Caco-2 (cell line): ENCODE measurements at regions of chr1 and their contacts with region 1.

Region 1: DNA sequence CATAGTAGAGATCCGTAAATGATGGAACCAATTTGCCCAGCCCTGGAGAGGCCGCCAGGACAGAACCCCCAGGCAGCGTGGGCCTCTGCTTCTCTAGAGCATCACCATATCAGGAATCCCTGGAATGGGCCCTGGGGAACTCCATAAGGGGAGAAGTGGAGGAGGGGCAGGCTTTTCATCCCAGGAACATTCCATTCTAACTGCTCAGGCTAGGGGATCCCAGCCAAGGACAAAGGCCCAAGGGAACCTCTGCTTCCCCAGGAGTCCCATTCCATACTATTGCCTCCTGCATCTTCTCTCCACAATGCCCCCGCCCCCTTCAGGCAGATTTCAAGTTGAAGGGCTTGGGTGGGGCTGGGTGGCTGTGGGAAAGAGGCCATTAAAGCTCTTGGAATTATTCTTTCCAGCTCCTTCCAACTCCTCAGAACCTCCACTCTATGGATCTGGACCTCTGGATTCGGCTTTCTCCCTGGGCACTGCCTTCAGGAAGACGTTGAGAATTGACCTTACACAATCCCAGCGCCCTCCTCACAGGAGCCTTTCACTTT is 6.0 kb downstream of the TRNP1 start:
- DNase-seq: peak; percentile 77 to 87
- H3K4me3 ChIP-seq: no peak overlapping the region
- H3K4me3 Mint-ChIP-seq: no peak overlapping the region
- H3K27ac Mint-ChIP-seq: no peak overlapping the region
- H3K4me1 ChIP-seq: peaks cover 73% of the 10 kb centered on the region
- H3K4me1 Mint-ChIP-seq: peaks cover 5% of the 10 kb centered on the region
- H3K27me3 ChIP-seq: no peaks in the 10 kb centered on the region
- H3K27me3 Mint-ChIP-seq: no peaks in the 10 kb centered on the region
- CTCF ChIP-seq: no peak

Region 2: DNA sequence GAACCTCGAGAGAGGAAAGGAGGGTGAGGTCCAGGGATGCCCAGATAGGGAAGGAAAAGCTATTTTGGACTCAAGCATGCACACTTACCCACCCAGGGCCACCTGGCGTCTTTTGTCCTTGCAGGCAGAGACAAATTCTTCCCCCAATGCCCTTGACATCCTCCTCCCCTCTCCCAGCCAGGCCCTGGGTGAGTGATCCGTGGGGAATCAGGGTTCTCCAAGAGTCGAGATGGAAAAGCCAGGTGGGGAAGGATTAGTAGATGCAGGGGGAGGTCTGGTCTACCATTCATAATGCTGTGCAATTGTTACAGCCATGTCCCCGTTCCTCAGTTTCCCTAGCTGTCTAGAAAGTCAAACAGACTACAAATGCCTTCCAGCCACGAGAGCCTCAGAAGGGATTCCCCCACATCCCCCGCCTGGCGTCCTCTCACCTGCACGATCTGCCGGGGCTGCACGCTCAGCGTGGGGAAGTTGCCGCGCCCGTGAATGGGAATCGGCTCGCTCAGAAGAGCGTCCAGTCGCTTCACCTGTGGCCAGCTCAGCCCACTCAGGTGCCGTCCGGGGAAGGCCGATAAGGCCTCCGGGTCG is 12.6 kb after region 1 on chr1:
- CTCF ChIA-PET with region 1: interaction called, 10 read pairs
- POLR2A ChIA-PET with region 1: interaction called, 13 read pairs
- intact Hi-C with region 1: loop called (anchors 1 kb)
- DNase-seq: no peak
- H3K4me3 ChIP-seq: peak overlapping the region; percentile 86
- H3K4me3 Mint-ChIP-seq: peak overlapping the region; percentile 81
- H3K27ac Mint-ChIP-seq: peak overlapping the region; percentile 87
- H3K4me1 ChIP-seq: peaks cover 42% of the 10 kb centered on the region
- H3K4me1 Mint-ChIP-seq: peaks cover 17% of the 10 kb centered on the region
- H3K27me3 ChIP-seq: no peaks in the 10 kb centered on the region
- H3K27me3 Mint-ChIP-seq: no peaks in the 10 kb centered on the region
- CTCF ChIP-seq: no peak

Region 3: DNA sequence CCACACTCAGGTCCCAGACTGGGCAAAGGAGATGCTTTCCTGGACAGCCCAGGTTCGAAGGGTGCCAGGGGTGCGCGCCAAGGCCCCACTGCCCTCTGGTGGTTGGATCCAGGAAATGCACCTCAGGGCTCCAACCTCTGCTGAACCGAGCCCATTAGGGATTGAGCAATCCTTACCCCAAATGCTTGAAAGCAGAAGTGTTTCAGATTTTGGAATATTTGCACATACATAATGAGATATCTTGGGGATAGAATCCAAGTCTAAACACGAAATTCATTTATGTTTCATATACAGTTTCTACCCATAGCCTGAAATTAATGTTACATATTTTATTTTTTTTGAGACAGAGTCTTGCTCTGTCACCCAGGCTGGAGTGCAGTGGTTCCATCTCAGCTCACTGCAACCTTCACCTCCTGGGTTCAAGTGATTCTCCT is 98.0 kb after region 1 on chr1:
- CTCF ChIA-PET with region 1: interaction called, 4 read pairs
- POLR2A ChIA-PET with region 1: no interaction called
- intact Hi-C with region 1: loop called (anchors 2 kb)
- DNase-seq: peak; percentile 63 to 83
- H3K4me3 ChIP-seq: no peak overlapping the region
- H3K4me3 Mint-ChIP-seq: no peak overlapping the region
- H3K27ac Mint-ChIP-seq: no peak overlapping the region
- H3K4me1 ChIP-seq: peaks cover 14% of the 10 kb centered on the region
- H3K4me1 Mint-ChIP-seq: peaks cover 13% of the 10 kb centered on the region
- H3K27me3 ChIP-seq: no peaks in the 10 kb centered on the region
- H3K27me3 Mint-ChIP-seq: no peaks in the 10 kb centered on the region
- CTCF ChIP-seq: peak; percentile 84 to 86